Activated CD4-positive, alpha-beta T cell treated with anti-CD3 and anti-CD28 coated beads for 36 hours (primary cell): ENCODE measurements at regions of chr15 and their contacts with region 1.

Region 1: DNA sequence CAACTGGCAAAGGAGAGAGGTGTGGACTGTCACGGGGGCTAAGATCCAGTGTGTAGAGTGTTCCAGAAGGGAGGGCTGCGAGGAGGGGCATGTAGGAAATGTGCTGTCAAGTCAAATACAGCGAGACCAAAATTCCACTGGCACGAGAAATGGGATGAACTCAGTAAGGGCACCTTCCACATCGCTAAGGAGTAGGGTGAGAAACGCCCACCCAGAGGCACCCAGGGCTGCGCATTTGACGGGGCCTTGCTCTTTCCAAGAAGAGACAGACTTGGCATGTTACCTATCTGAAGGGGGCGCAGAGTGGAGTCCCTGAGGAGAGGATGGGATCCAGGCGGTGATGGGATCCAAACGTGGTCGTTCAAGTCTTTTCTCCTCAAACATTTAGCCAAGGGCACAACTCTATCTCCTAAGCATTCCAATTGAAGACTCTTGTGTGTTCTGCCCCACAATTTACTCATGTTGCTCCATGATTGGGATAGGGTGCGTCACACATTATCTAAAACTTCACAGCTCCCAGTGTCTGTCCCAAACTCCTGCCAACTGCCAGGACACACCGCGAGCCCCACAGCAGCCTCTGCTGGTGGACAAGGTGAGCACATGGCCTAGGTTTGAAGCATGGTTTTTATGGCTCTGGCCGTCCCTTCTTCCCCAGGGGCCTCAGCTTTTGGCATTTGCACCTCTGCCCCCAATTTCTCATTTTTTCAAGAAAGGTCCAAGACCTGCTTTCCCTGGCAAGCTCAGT is 7.6 kb downstream of the SELENOS start:
- DNase-seq: no peak
- ATAC-seq: peak; percentile 54
- H3K4me3 Mint-ChIP-seq: no peak overlapping the region
- H3K27ac Mint-ChIP-seq: no peak overlapping the region
- H3K4me1 Mint-ChIP-seq: peaks cover 2% of the 10 kb centered on the region
- H3K27me3 Mint-ChIP-seq: no peaks in the 10 kb centered on the region

Region 2: DNA sequence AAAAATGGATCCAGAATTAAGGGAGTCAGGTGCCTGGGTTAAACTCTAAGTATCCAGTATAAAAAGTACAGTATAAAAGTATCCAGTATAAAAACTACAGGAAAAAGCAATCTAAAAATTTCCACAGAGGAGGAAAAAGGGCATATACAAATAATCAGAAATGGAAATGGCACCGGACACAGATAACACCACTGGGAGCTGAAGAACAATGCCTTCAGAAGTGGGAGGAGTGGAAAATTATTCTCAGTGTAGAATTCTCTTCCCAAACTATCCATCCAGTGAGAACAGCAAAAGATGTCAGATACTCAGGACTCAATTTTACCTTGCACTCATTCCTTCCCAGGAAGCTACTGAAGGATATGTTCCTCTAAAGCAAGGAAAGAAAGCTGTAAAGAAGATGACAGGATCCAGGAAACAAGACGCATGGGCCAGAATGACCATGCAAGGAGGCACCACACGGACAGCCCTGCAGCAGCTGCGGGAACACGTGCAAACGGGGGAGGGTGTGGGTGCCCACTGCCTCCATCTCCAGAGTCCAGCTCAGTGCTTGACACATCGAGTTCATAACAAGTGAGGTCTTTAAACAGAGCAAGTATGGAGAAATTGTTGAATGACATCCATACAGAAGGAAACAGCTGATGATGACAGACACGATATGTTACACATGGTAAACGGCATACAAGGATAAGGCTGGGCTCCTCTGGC is 86.3 kb before region 1 on chr15:
- CTCF ChIA-PET with region 1: no interaction called
- POLR2A ChIA-PET with region 1: interaction called, 11 read pairs
- intact Hi-C with region 1: no loop called
- DNase-seq: no peak
- ATAC-seq: no peak
- H3K4me3 Mint-ChIP-seq: no peak overlapping the region
- H3K27ac Mint-ChIP-seq: no peak overlapping the region
- H3K4me1 Mint-ChIP-seq: peaks cover 70% of the 10 kb centered on the region
- H3K27me3 Mint-ChIP-seq: no peaks in the 10 kb centered on the region